Spleen (tissue), 13 donors: ENCODE measurements at regions of chr14 and their contacts with region 1.

Region 1: DNA sequence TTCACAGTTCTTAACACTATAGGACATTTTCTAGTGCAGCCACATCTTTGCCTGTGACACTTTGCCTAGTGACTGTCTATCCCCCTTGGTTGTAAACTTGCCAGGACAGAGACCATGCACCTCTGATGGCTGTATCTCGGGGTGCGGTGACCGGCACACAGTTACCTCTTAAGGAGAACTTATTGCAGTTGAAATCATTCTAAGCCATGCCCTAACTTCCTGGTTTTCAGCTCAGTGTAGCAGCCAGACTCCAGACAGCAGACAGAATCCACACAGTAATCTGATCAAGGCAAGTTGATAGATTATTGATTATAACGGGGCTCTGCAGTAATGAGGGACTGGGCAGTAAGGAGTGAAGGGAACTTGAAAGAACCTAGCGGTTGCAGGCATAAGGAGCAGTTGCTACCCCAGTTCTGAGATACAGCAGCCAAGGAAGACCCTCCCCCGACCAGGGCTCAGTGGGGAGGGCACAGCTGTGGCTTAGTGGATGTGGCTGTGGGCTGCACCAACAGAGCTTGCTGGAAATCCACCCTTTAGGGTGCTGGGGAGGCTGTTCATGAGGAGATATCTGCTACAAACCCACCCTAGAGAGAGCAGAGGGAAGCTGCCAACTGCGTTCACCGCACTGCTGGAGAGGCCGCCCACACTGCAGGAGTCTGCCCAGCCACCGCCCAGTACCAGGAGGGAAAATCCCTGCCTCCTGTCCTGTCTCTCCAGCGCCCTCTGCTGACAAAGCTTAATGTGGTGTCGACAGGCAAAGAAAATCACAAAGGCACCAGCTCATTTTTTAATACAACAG is 58.2 kb upstream of the BEGAIN start:
- DNase-seq: peak; percentile 89
- H3K4me3 ChIP-seq: no peak overlapping the region
- H3K27ac ChIP-seq: no peak overlapping the region
- H3K4me1 ChIP-seq: peaks cover 14 to 32% (median 30%) of the 10 kb centered on the region in 6 donors
- H3K27me3 ChIP-seq: peaks cover 0 to 10% (median 0%) of the 10 kb centered on the region in 7 donors
- CTCF ChIP-seq: peak; percentile 41 to 84 (median 77)
- POLR2A ChIP-seq: no peak

Region 2: GRCh38 chr14:99946652-99947489 is 698.5 kb before region 1 on chr14:
- intact Hi-C with region 1: no loop called
- DNase-seq: no peak
- H3K4me3 ChIP-seq: peak overlapping the region in 4 of 8 donors; percentile 7 to 53 (median 18)
- H3K27ac ChIP-seq: no peak overlapping the region
- H3K4me1 ChIP-seq: peaks cover 5 to 18% (median 13%) of the 10 kb centered on the region in 6 donors
- H3K27me3 ChIP-seq: peaks cover 0 to 60% (median 16%) of the 10 kb centered on the region in 7 donors
- CTCF ChIP-seq: peak; percentile 34 to 91 (median 84)
- POLR2A ChIP-seq: no peak

Region 3: DNA sequence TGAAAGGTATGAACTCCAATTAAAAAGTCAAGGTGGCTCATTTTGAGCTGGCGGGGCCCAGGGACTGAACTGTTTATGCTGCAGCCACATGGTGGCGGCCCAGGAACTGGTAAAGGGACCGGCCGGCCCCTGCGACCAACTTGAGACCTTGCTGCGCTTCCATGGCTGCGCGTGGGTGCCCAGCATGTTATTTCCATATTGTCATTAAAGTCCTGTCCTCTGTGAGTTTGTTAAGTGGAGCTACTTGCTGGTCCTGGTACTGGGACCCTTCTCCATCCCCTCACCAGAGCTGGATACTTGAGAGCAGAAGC is 120.5 kb before region 1 on chr14:
- intact Hi-C with region 1: loop called (anchors 5 kb)
- DNase-seq: peak; percentile 78
- H3K4me3 ChIP-seq: no peak overlapping the region
- H3K27ac ChIP-seq: no peak overlapping the region
- H3K4me1 ChIP-seq: peaks cover 0 to 5% (median 0%) of the 10 kb centered on the region in 6 donors
- H3K27me3 ChIP-seq: no peaks in the 10 kb centered on the region
- CTCF ChIP-seq: peak in 9 of 11 experiments; percentile 32 to 71 (median 60)
- POLR2A ChIP-seq: no peak